Right cardiac atrium (tissue), 5 donors: ENCODE measurements at regions of chr12 and their contacts with region 1.

Region 1: DNA sequence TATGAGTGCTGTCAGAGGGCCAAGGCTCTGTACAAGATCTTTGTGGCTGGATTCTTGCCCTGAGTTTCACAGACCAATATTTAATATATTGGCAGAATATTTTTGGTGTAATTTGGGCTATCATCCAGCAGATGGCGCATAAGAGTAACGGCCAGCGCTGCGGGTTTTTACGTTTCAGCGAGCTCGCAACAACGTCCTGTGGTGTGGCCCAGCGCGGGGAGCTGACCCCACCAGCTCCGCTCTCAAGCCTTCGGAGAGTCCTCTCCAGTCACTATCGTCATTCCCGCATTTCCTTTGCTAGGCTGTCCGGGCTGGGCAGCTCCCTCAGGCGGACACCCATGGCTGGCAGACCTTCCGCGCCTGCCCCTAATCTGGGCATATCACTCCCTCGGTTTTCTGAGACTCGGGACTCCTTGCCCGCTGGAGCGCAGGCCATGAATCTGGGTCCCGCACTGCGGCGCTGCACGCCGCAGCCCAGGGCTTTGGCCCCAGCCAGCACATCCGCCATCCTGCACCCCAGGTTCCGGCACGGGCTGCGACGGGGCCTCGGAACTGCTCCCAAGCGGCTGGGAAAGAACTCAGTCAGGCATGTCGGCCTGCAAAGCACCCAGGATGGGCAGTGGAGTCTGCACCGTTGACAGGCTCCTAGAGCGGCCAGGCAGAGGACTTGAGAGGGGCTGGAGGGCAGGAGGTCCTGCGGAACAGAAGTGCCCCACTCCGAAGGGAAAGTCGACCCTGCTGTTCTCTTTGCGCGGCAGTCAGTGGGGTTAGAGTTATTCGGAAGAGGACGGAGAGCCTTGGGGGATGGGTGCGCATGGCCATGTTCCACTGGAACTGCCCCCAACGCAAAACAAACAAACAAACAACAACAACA is 18.4 kb downstream of the OLR1 start:
- DNase-seq: peak; percentile 70 to 86 (median 86)
- ATAC-seq: peak; percentile 96
- H3K4me3 ChIP-seq: peak overlapping the region; percentile 45
- H3K27ac ChIP-seq: peak overlapping the region; percentile 78
- H3K4me1 ChIP-seq: peaks cover 5% of the 10 kb centered on the region
- H3K27me3 ChIP-seq: no peaks in the 10 kb centered on the region

Region 2: GRCh38 chr12:10190558-10191388 is 37.3 kb after region 1 on chr12:
- intact Hi-C with region 1: loop called in 3 of 4 experiments (anchors 2 to 5 kb)
- DNase-seq: peak; percentile 54 to 72 (median 61)
- ATAC-seq: peak; percentile 97
- H3K4me3 ChIP-seq: no peak overlapping the region
- H3K27ac ChIP-seq: no peak overlapping the region
- H3K4me1 ChIP-seq: no peaks in the 10 kb centered on the region
- H3K27me3 ChIP-seq: no peaks in the 10 kb centered on the region

Region 3: GRCh38 chr12:10212201-10213131 is 59.0 kb after region 1 on chr12 and contains the start of gene GABARAPL1:
- intact Hi-C with region 1: loop called in 1 of 4 experiments (anchors 10 kb)
- DNase-seq: peak; percentile 98 to 99 (median 98)
- ATAC-seq: peak; percentile 96 to 97
- H3K4me3 ChIP-seq: peak within 1 kb of the TSS; percentile 92
- H3K27ac ChIP-seq: peak within 1 kb of the TSS; percentile 100
- H3K4me1 ChIP-seq: peaks cover 3% of the 10 kb centered on the region
- H3K27me3 ChIP-seq: no peaks in the 10 kb centered on the region
- total RNA-seq, gene GABARAPL1: 212 to 302 (median 279) TPM

Region 4: GRCh38 chr12:10385166-10385613 is 231.7 kb after region 1 on chr12:
- intact Hi-C with region 1: no loop called
- DNase-seq: no peak
- ATAC-seq: no peak
- H3K4me3 ChIP-seq: no peak overlapping the region
- H3K27ac ChIP-seq: no peak overlapping the region
- H3K4me1 ChIP-seq: no peaks in the 10 kb centered on the region
- H3K27me3 ChIP-seq: no peaks in the 10 kb centered on the region